ENCODE measurements at regions of chr6 and their contacts with region 1.

Region 1: GRCh38 chr6:99868074-99868702 is 125.8 kb downstream of the MCHR2 start:
- DNase-seq: peak; percentile 82
- ATAC-seq: peak; percentile 51
- H3K4me3 Mint-ChIP-seq: no peak overlapping the region
- H3K27ac Mint-ChIP-seq: no peak overlapping the region
- H3K4me1 Mint-ChIP-seq: peaks cover 4% of the 10 kb centered on the region
- H3K27me3 Mint-ChIP-seq: peaks cover 34% of the 10 kb centered on the region
- CTCF ChIP-seq: peak; percentile 80

Region 2: DNA sequence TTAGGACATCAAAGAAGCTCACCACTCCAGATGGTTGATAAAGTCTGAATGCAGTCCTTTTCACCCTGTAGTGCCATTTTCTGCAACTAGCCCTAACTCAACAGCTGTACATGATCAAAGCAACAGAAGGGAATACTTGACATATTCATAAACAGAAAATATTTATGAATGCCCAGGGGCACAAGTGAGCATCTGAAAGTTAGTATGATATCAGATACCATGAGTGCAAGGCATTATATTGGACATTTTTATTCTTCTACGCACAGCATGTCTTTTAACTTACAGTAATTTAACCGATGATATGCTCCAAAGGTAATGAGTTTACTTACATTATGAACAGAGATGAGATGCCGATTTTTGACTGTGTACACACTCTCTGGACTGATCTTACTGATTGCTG is 16.2 kb before region 1 on chr6:
- CTCF ChIA-PET with region 1: interaction called, 27 read pairs
- POLR2A ChIA-PET with region 1: no interaction called
- intact Hi-C with region 1: no loop called
- DNase-seq: no peak
- ATAC-seq: no peak
- H3K4me3 Mint-ChIP-seq: no peak overlapping the region
- H3K27ac Mint-ChIP-seq: no peak overlapping the region
- H3K4me1 Mint-ChIP-seq: no peaks in the 10 kb centered on the region
- H3K27me3 Mint-ChIP-seq: peaks cover 16% of the 10 kb centered on the region
- CTCF ChIP-seq: no peak

Region 3: GRCh38 chr6:99894815-99895214 is 26.6 kb after region 1 on chr6:
- CTCF ChIA-PET with region 1: interaction called, 13 read pairs
- POLR2A ChIA-PET with region 1: no interaction called
- intact Hi-C with region 1: no loop called
- DNase-seq: no peak
- ATAC-seq: no peak
- H3K4me3 Mint-ChIP-seq: no peak overlapping the region
- H3K27ac Mint-ChIP-seq: no peak overlapping the region
- H3K4me1 Mint-ChIP-seq: no peaks in the 10 kb centered on the region
- H3K27me3 Mint-ChIP-seq: peaks cover 5% of the 10 kb centered on the region
- CTCF ChIP-seq: no peak

Region 4: DNA sequence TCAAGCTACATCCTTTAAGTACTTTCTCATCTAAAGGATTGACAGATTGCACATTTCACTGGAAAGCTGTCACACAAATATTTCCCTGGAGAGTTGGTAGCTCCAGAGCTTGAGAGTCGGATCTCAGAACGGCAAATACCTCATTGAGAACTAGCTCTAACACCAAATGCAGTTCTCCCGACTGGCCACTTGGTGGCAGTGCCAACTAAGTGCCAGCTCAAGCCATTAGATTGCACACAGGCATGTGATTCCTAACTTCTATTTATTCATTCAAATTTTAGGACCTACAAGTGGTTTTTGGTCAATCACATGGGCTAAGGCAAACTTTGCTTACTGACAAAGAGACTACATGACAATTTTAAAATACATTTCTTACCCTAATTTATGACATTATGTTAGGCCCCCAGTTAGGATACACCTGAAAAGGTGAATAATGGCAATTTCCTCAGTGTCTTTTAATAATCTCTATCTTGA is 133.8 kb after region 1 on chr6:
- CTCF ChIA-PET with region 1: interaction called, 25 read pairs
- POLR2A ChIA-PET with region 1: no interaction called
- intact Hi-C with region 1: no loop called
- DNase-seq: peak; percentile 43
- ATAC-seq: peak; percentile 74
- H3K4me3 Mint-ChIP-seq: no peak overlapping the region
- H3K27ac Mint-ChIP-seq: no peak overlapping the region
- H3K4me1 Mint-ChIP-seq: no peaks in the 10 kb centered on the region
- H3K27me3 Mint-ChIP-seq: peaks cover 18% of the 10 kb centered on the region
- CTCF ChIP-seq: peak; percentile 94

Region 5: GRCh38 chr6:100099189-100100074 is 231.2 kb after region 1 on chr6:
- CTCF ChIA-PET with region 1: interaction called, 74 read pairs
- POLR2A ChIA-PET with region 1: no interaction called
- intact Hi-C with region 1: loop called (anchors 2 kb)
- DNase-seq: no peak
- ATAC-seq: no peak
- H3K4me3 Mint-ChIP-seq: no peak overlapping the region
- H3K27ac Mint-ChIP-seq: no peak overlapping the region
- H3K4me1 Mint-ChIP-seq: no peaks in the 10 kb centered on the region
- H3K27me3 Mint-ChIP-seq: peaks cover 4% of the 10 kb centered on the region
- CTCF ChIP-seq: peak; percentile 49

Region 6: GRCh38 chr6:100126790-100127484 is 258.7 kb after region 1 on chr6:
- CTCF ChIA-PET with region 1: no interaction called
- POLR2A ChIA-PET with region 1: no interaction called
- intact Hi-C with region 1: no loop called
- DNase-seq: no peak
- ATAC-seq: peak; percentile 27
- H3K4me3 Mint-ChIP-seq: no peak overlapping the region
- H3K27ac Mint-ChIP-seq: no peak overlapping the region
- H3K4me1 Mint-ChIP-seq: no peaks in the 10 kb centered on the region
- H3K27me3 Mint-ChIP-seq: peaks cover 3% of the 10 kb centered on the region
- CTCF ChIP-seq: no peak

Measured in activated CD8-positive, alpha-beta T cell treated with anti-CD3 and anti-CD28 coated beads for 36 hours (primary cell).